Activated naive CD4-positive, alpha-beta T cell treated with anti-CD3 and anti-CD28 coated beads for 36 hours (primary cell): ENCODE measurements at regions of chr1 and their contacts with region 1.

Region 1: DNA sequence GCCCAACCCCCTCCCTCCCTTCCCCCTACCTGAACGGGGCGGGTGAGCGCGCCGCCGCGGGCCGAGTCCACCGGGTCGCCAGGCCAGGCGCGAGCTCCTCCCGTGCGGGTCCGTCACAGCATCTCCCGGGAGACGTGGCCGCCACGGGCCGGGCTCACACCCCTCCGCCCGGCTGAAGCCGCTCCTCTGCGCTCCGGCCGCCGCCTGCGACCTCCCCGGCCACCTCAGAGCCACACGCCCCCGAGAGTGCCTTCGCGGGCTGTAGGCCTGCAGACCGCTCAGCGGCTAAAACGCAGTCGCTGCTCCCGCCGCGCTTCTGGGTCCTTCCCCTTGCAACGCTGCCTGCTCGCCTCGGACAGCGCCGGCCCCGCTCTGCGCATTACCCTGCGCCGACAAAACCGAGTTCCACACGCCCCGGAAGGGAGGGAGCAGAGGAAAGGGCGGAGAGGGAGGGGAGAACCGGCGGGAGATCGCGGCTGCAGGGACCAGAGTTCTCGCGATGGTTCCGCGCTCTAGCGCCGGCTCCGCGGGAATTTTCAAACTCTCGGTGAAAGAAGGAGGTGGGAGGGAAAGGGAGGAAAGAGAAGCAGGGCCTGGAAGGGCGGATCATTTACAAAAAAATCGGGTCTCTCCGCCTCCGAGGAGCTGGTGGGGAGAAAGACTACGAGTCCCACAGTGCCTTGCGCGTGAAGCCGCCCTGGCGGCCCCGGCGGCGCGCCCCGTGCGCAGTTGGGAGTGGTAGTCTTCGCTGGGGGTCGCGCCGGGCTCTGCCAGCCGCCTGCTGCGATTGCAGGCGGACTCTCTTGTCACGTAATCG is at the start of gene AHCTF1:
- DNase-seq: peak; percentile 96
- H3K4me3 Mint-ChIP-seq: peak within 1 kb of the TSS; percentile 99
- H3K27ac Mint-ChIP-seq: peak within 1 kb of the TSS; percentile 95
- H3K4me1 Mint-ChIP-seq: peaks cover 28% of the 10 kb centered on the region
- H3K27me3 Mint-ChIP-seq: no peaks in the 10 kb centered on the region
- total RNA-seq, gene AHCTF1: 32.1 to 38.8 TPM

Region 2: GRCh38 chr1:244970661-244971551 is 1960.9 kb before region 1 on chr1:
- CTCF ChIA-PET with region 1: no interaction called
- intact Hi-C with region 1: loop called (anchors 5 kb)
- DNase-seq: peak; percentile 93
- H3K4me3 Mint-ChIP-seq: peak overlapping the region; percentile 93
- H3K27ac Mint-ChIP-seq: peak overlapping the region; percentile 98
- H3K4me1 Mint-ChIP-seq: peaks cover 11% of the 10 kb centered on the region
- H3K27me3 Mint-ChIP-seq: no peaks in the 10 kb centered on the region

Region 3: DNA sequence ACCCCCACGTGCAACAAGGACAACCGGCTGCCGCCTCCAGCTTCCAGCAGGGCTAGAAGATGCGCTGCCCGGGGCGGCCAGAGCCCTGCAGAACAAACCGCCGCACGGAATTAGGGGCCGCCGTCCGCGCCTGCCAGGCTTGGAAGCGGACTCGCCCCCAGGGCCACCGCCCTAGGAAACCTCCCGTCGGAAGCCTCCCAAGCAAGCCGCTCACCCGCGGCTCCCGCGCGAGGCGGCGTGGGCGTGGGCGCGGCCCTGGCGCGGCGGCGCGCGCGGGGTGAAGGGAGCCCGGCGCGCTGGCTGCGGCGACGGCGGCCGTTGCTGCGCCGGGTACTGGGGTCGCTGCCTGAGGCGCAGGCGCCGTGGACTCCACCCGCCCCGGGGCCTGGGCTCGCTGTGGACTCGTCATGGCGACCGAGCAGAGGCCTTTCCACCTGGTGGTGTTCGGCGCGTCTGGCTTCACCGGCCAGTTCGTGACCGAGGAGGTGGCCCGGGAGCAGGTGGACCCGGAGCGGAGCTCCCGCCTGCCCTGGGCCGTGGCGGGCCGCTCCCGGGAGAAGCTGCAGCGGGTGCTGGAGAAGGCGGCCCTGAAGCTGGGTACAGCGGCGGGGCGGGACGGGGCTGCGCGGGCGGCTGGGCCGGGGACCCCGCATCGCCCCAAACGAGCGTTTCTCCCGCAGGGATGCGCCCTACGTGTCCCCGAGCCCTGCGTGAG is 207.6 kb before region 1 on chr1 and contains the start of gene SCCPDH:
- CTCF ChIA-PET with region 1: no interaction called
- intact Hi-C with region 1: loop called (anchors 1 kb)
- DNase-seq: peak; percentile 64
- H3K4me3 Mint-ChIP-seq: peak within 1 kb of the TSS; percentile 88
- H3K27ac Mint-ChIP-seq: peak within 1 kb of the TSS; percentile 66
- H3K4me1 Mint-ChIP-seq: peaks cover 10% of the 10 kb centered on the region
- H3K27me3 Mint-ChIP-seq: no peaks in the 10 kb centered on the region
- total RNA-seq, gene SCCPDH: 23.8 to 24.3 TPM

Region 4: DNA sequence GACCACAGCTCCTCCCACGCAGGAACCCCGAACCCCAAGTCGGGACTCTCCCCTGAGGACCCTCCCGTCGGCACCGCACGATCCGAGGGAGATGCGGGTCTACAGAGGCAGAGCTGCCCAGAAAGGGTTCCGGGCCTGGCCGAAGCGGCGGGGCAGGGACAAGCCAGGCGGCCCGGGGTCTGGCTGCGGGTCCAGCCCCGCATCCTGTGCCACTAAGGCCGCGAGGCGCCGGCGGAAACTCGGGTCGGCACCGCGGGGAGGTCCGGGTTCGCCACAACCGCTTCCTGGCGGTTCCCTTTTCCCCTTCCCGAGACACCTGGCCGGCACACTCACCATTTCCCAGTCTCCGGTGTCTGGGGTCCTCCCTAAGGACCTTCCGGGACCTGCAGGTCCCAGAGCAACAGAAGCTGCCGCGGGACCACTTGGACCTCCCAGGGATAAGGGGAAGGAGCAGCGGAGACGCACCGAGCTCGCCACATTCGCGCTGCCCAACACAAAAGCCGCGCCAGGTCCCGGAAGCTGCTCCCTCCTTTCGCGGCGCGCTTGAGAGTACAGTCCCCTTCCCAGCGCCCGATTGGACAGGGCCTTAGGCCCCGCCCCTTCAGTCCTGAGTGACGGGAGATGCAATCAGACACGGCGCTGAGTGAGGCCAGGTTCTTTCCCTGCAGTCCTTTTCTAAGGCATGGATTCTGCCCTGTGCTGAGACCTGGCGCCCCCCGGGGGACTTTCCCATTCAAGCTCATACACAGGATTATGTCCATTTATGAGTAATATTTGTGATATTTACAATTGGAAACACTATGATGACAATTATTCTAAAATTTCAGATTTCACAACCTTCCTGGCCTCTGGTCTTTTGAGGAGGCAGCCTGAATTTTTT is 146.7 kb after region 1 on chr1 and contains the start of gene ZNF670:
- CTCF ChIA-PET with region 1: no interaction called
- intact Hi-C with region 1: loop called (anchors 1 kb)
- DNase-seq: peak; percentile 98
- H3K4me3 Mint-ChIP-seq: peak within 1 kb of the TSS; percentile 91
- H3K27ac Mint-ChIP-seq: peak within 1 kb of the TSS; percentile 90
- H3K4me1 Mint-ChIP-seq: peaks cover 22% of the 10 kb centered on the region
- H3K27me3 Mint-ChIP-seq: peaks cover 6% of the 10 kb centered on the region
- total RNA-seq, gene ZNF670: 4.1 to 4.3 TPM

Region 5: GRCh38 chr1:247210376-247211117 is 278.8 kb after region 1 on chr1:
- CTCF ChIA-PET with region 1: no interaction called
- intact Hi-C with region 1: loop called (anchors 1 kb)
- DNase-seq: peak; percentile 98
- H3K4me3 Mint-ChIP-seq: peak overlapping the region; percentile 90
- H3K27ac Mint-ChIP-seq: peak overlapping the region; percentile 93
- H3K4me1 Mint-ChIP-seq: peaks cover 56% of the 10 kb centered on the region
- H3K27me3 Mint-ChIP-seq: no peaks in the 10 kb centered on the region

Region 6: DNA sequence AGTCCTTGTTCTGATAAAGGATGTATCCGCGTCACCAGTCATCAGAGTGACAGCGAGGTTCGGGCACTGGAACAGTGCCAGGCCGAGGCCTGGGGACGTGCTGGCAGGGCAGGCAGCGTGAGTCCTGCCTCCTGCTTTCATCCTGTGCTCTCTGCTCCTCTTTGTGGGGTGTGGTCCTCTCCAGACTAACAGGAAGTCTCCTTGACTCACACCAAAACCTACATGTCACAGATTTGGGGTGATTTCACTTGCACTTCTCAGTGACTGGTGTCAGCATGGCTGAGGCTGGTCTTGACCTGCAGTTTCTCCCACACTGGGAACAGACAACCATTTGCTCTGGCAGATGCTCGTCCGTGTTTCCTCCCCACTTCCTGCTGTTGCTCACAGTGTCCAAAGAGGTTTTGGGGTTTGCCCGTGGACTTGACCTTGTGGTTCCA is 475.4 kb after region 1 on chr1:
- CTCF ChIA-PET with region 1: no interaction called
- intact Hi-C with region 1: loop called (anchors 5 kb)
- DNase-seq: peak; percentile 73
- H3K4me3 Mint-ChIP-seq: no peak overlapping the region
- H3K27ac Mint-ChIP-seq: no peak overlapping the region
- H3K4me1 Mint-ChIP-seq: peaks cover 42% of the 10 kb centered on the region
- H3K27me3 Mint-ChIP-seq: peaks cover 3% of the 10 kb centered on the region

Region 7: DNA sequence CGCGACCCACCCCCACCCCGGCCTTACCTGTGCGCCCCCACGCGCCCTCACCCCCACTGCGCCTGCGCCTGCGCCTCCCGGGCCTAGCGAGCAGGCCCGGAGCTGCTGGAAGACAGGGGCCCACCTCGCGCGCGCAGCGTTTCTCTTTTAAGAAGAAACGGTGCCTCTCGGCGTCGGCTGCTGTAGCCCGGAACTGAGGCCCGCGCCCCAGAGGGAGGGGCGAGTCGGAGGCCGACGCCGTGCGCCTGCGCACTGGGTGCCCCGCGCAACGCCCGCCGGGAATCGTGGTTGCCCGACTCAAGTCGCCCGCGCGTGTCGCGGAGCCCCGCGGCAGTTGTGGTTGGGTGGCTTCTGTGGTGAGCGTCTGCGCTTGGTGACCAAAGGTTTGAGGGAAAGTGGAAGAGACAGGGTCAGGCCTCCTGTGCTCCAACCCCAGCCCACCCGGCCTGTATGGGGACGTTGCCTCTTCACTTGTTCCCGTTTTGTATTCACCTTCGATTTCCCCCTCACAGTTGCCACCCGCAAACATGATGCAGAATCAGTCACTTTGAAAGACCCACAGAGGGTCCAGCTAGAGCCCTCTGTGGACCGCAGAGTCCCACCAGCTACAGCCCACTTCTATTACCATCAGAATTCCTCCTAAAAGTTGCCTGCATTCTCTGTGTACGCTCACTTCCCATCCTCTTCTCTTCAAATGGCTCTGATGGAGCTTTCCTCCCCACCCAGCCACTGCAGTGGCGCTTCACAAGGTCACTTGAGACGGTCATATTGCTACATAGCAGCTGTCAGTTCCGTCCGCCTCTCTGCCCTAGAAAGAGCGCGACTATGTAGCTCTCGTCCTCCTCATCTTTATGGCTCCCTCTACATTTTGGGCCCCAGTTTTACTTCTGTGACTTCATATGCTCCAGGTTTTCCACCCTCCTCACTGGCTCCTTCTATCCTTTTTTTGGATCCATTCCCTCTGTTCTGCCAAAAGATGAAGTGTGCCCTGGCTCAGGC is 1927.4 kb after region 1 on chr1 and contains the start of gene ZNF692:
- CTCF ChIA-PET with region 1: no interaction called
- intact Hi-C with region 1: loop called (anchors 2 kb)
- DNase-seq: peak; percentile 97
- H3K4me3 Mint-ChIP-seq: peak within 1 kb of the TSS; percentile 94
- H3K27ac Mint-ChIP-seq: peak within 1 kb of the TSS; percentile 93
- H3K4me1 Mint-ChIP-seq: peaks cover 65% of the 10 kb centered on the region
- H3K27me3 Mint-ChIP-seq: no peaks in the 10 kb centered on the region
- total RNA-seq, gene ZNF692: 87.6 to 88.7 TPM